Activated naive CD4-positive, alpha-beta T cell treated with anti-CD3 and anti-CD28 coated beads for 36 hours (primary cell): ENCODE measurements at regions of chr12 and their contacts with region 1.

Region 1: DNA sequence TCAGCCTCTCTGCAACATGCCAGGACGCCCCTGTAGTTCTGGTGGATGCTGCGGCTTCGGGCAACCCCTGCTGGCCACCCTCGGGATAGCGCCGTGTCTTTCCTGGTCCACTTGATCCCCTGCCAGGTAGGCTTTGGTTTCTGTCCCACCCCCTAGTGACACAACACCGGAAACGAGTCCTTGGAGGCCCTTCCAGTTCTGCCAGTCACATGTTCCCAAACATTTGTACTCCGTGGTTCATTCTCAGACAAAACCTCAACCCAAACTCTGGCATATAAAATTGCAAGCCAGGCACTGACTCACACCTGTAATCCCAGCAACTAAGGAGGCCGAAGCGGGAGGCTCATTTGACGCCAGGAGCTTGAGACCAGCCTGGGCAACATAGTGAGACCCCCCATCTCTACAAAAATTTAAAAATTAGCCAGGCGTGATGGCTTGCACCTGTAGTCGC is 37.1 kb downstream of the RASAL1 start:
- DNase-seq: peak; percentile 88
- H3K4me3 Mint-ChIP-seq: no peak overlapping the region
- H3K27ac Mint-ChIP-seq: no peak overlapping the region
- H3K4me1 Mint-ChIP-seq: peaks cover 18% of the 10 kb centered on the region
- H3K27me3 Mint-ChIP-seq: no peaks in the 10 kb centered on the region

Region 2: DNA sequence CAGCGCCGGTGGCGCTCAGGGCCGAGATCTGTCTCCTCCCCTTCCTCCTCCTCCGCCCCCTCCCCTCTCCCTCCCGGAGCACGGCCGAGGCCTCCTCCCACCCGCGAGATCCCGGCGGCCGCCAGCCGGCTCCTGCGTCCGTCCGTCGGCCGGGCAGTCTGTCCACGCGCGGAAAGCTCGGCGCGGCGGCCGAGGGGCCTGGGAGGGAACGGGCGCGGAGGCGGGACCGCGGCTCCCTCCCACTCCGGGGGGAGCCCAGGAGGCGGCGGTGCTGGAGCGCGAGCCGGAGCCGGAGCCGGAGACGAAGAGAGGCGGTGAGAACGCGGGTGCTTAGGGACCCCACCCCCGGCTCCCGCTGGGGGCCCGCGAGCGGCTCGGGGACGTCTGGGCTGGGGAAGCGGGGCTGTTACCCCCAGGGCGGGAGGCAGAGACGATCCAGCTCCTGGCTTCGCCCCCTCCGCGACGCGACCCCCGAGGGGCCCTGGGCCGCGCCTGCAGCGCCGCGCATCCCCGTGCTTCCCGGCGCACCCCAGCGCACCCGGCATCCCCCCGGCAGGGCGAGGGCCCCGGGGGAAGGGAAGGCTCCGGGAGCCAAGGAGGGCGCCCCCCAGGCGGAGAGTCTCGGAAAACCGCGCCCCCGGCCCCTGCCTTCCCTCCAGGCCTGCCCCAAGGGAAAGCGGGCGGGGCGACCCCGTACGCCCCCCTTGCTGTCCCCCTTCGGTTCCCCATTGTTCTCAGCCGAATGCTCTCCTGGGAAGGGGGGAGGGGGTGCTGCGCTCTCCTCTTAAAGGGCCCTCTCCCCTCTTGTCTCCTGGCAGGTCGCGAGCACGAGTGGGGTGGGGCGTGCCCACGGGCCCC is 41.6 kb before region 1 on chr12 and contains the start of gene DTX1:
- CTCF ChIA-PET with region 1: interaction called, 84 read pairs
- intact Hi-C with region 1: loop called (anchors 2 kb)
- DNase-seq: peak; percentile 51
- H3K4me3 Mint-ChIP-seq: peak within 1 kb of the TSS; percentile 74
- H3K27ac Mint-ChIP-seq: no peak within 1 kb of the TSS
- H3K4me1 Mint-ChIP-seq: peaks cover 28% of the 10 kb centered on the region
- H3K27me3 Mint-ChIP-seq: no peaks in the 10 kb centered on the region
- total RNA-seq, gene DTX1: 8.3 to 10.7 TPM

Region 3: GRCh38 chr12:113239288-113239771 is 140.9 kb after region 1 on chr12:
- CTCF ChIA-PET with region 1: no interaction called
- intact Hi-C with region 1: no loop called
- DNase-seq: no peak
- H3K4me3 Mint-ChIP-seq: no peak overlapping the region
- H3K27ac Mint-ChIP-seq: no peak overlapping the region
- H3K4me1 Mint-ChIP-seq: peaks cover 29% of the 10 kb centered on the region
- H3K27me3 Mint-ChIP-seq: no peaks in the 10 kb centered on the region

Region 4: GRCh38 chr12:113413488-113413939 is 315.0 kb after region 1 on chr12:
- CTCF ChIA-PET with region 1: no interaction called
- intact Hi-C with region 1: no loop called
- DNase-seq: no peak
- H3K4me3 Mint-ChIP-seq: no peak overlapping the region
- H3K27ac Mint-ChIP-seq: no peak overlapping the region
- H3K4me1 Mint-ChIP-seq: no peaks in the 10 kb centered on the region
- H3K27me3 Mint-ChIP-seq: no peaks in the 10 kb centered on the region